Cardiac septum (tissue), 1 donor: ENCODE measurements at regions of chr17 and their contacts with region 1.

Region 1: DNA sequence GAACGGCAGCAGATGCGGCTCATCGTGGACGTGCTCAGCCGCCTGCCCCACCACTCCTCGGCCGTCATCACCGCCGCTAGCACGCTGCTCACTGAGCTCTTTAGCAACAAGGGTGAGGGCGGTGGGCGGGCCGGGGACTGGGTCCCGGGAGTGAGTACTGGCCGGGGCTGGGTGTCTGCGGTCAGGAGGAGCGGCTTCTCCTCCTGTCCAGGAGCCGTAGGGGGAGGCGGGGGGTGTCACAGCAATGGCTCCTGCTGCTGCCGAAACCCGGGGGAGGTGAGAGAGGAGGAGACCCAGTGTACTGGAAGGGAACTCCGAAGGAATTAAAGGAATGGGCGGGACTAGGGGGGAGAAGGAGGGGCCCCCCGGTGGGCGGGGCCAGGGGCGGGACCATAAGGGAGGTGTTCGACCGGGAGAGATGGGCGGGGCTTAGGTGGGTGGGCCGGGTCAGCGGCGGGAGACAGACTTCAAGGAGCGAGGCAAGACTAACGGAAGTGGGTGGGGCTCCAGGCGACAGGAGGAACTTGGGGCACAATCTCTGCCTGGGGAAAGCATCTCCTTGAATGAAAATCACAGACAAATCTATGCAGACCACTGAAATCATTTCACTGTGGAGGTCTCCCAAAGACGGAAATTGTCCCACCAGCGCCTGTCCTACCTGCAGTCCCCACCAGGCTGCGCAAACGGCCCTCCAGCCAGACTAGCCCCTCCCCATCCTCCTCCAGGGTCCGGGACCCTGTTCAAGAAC is 2.4 kb downstream of the NAGS start:
- DNase-seq: peak; percentile 98

Region 2: DNA sequence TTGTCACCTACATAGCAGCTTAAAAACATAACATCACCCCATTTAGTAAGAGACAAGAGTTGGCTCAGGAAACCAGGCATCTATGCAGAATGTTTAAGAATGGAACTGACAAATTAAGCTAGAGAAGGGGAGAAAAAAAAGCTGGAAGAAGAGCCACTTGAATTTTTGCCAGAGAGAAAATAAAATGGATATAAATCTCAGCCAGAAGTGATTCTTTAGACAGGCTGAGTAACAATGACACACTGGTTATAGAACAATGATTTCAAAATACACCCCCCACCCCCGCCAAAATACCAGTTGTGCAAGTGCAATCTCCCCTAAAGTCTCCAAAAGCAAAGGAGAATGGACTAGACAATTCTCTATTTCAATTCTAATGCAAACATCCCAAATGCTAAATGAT is 37.3 kb after region 1 on chr17:
- intact Hi-C with region 1: loop called (anchors 5 kb)
- DNase-seq: no peak

Region 3: DNA sequence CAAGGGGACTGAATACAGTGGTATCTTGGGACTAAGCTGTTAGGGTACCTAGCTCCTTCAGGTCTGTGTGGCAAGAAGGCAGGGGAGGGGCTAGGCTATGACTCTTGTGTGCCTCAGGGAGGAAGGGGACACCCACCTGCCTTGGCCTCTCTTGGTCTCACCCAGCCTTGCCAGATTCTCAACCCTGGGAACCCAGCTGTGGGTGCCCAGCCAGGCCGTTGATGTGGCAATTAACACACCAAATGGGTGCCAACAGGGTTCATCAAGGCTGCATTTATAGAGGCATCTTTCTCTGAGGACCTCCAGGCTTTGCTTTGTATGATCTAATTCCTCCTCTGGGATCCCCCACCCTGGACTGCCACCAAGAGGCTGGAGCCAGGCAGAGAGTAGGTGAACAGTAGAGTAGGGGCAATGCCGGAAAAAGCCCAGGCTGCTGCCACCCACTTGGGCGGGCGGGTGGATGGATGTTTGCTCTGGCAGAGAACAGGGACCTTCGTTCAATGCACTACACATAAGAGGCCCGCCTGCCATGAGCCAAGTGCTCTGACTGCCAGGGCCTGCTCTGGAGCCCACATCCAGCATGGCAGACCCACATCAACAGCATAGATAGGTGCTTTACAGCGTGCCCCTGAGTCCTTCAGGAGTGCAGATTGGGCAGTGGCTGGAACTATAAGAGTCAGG is 160.5 kb after region 1 on chr17:
- intact Hi-C with region 1: loop called (anchors 5 kb)
- DNase-seq: no peak